GM18951 (cell line): ENCODE measurements at regions of chr21 and their contacts with region 1.

Region 1: GRCh38 chr21:24895885-24896734 is 711.2 kb downstream of the MRPL39 start:
- POLR2A ChIP-seq: no peak

Region 2: DNA sequence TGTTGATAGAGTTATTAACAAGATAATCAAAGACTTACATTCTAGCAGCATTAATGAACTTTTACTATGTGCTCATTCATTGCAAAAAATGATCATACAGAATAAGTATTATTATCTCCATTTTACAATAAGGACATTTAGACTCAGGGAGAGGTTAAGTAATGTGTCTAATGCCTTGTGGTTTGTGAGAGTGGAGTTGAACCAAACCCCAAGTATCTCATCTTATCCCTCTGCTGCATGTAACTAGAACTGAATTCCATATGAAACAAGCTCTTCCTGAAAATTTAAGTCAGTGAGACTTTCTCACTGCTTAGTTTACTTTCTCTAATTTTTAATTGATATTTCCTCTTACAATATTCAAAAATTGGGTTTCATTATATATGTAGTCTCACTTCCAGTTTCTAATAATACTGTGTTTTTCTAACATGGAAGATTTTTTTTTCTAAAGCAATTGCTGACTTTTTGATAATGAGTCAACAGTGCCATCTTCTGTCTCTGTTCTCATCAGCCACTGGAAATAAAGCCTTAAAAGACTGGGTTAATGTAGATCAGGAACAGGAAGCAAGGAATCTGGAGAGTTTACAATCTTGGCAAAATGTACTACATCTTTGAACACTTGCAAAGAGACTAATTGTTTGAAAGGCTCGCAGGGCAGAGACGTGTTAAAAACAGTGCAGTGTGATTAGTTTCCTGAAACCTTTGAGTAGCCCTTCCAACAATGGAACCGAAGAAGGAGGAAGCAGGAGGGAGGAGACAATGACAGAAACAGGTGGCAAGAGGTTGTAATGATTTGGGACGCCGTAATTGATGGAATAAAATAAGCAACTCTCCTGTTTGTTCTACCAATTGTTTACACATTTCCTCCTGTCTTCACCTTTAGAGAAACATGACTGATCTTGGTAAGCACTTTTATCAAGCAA is 143.6 kb after region 1 on chr21:
- in situ Hi-C with region 1: loop called (anchors 5 kb)
- POLR2A ChIP-seq: no peak

Region 3: GRCh38 chr21:25307489-25307888 is 411.4 kb after region 1 on chr21:
- in situ Hi-C with region 1: loop called (anchors 10 kb)
- POLR2A ChIP-seq: no peak

Region 4: DNA sequence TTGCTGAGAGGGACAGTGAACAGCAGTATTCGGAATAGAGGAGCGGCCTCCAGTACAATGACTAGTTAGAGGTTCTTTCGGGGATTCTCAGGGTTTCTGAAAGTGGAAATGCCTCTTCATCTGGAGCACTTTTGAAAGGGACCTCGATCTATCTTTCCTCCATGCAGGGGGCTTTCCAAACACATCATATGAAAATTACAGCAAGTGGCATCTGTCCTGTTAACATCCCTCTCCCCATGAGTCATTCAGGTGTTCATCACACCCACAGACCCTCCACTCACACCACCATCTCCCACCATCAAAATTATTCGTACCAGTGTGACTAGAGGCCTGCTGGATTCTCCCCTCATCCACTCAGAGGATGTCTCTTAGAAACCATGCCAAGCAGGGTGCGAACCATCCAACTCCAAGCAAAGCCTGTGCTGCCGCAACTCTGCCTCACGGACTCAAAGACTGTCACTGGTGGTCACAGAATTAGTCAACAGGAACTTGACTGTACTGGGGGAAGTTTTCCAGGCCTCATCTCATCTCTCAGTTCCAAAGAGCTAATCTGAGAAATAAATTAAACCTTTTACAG is 500.1 kb after region 1 on chr21:
- in situ Hi-C with region 1: no loop called
- POLR2A ChIP-seq: no peak